WTC11 (cell line): ENCODE measurements at regions of chr17 and their contacts with region 1.

Region 1: DNA sequence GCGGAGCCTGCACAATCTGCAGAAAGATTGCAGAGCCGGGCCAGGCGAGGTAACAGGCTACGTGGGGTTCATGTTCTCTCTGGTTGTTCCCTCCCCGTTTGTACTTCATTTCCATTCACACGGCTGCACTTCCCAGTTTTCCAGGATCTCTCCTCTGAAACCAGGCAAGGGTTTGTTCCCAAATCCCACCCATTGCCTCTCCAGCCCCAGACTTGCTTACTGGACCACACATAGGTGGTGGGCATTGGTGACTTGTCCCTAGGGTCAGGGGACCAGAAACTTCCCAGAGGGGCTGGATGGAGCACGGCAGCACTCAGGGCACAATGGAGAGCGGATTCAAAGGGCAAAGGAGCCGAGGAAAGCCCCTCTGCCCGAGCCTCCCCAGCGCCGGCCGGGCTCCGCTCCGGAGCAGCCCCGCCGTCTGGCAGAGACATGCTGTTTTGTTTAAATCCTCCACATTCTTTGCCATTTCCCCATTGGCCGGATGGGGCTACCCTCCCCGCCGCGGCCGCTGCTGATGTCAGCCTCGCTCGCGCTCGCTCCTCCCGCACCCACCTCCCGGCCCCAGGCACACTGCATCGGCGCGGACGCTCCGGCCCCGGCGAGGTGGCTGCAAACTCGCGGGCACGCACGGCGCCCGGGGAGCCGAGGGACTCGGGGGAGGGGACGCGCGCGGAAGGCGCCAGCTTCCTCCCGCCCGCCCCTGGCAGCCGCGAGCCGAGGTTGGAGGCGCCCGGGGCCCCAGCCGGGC is at the start of gene PITPNC1:
- DNase-seq: peak; percentile 87
- ATAC-seq: peak; percentile 71
- H3K4me3 Mint-ChIP-seq: peak within 1 kb of the TSS; percentile 81
- H3K27ac Mint-ChIP-seq: peak within 1 kb of the TSS; percentile 96
- H3K4me1 Mint-ChIP-seq: peaks cover 35% of the 10 kb centered on the region
- H3K27me3 Mint-ChIP-seq: no peaks in the 10 kb centered on the region; the same call in 1 of the 2 replicates
- CTCF ChIP-seq: no peak
- total RNA-seq, gene PITPNC1: 36.9 to 42.0 TPM (median 39.8 TPM) in 3 replicates

Region 2: DNA sequence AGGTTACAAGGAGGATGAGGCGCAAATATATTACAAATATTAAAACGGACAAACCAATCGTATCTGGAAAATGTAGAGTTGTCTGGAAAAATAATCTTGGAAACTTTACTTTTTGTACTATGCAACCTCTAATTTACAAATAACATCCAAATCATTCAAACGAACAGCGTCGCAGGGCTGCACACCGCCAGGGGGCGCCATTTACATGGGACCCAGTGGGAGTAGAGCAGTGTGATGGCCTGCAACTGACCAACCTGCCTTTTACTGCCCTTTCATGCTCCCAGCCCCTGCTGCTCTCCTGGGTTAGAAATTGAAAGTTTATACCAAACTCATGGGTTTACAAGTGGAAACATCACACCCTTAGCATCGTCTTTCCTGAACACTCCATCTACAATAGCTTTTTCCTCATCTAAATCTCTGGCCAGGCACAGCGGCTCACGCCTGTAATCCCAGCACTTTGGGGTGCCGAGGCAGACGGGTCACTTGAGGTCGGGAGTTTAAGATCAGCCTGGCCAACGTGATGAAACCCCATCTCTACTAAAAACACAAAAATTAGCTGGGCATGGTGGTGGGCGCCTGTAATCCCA is 10.1 kb after region 1 on chr17:
- CTCF ChIA-PET with region 1: interaction called, 14 read pairs
- POLR2A ChIA-PET with region 1: no interaction called
- DNase-seq: peak; percentile 79
- ATAC-seq: peak; percentile 83
- H3K4me3 Mint-ChIP-seq: no peak overlapping the region
- H3K27ac Mint-ChIP-seq: 0 out of 2 replicates have a peak overlapping the region, but pooled peaks have one; percentile 53
- H3K4me1 Mint-ChIP-seq: peaks cover 29% of the 10 kb centered on the region
- H3K27me3 Mint-ChIP-seq: no peaks in the 10 kb centered on the region
- CTCF ChIP-seq: peak; percentile 98

Region 3: GRCh38 chr17:67491009-67491680 is 114.2 kb after region 1 on chr17:
- CTCF ChIA-PET with region 1: interaction called, 13 read pairs
- POLR2A ChIA-PET with region 1: no interaction called
- DNase-seq: peak; percentile 47
- ATAC-seq: peak; percentile 72
- H3K4me3 Mint-ChIP-seq: peak overlapping the region; percentile 14; the same call in 1 of the 2 replicates
- H3K27ac Mint-ChIP-seq: peak overlapping the region; percentile 86
- H3K4me1 Mint-ChIP-seq: peaks cover 56% of the 10 kb centered on the region
- H3K27me3 Mint-ChIP-seq: no peaks in the 10 kb centered on the region
- CTCF ChIP-seq: no peak

Region 4: GRCh38 chr17:67602956-67603355 is 226.0 kb after region 1 on chr17:
- CTCF ChIA-PET with region 1: interaction called, 18 read pairs
- POLR2A ChIA-PET with region 1: no interaction called
- DNase-seq: peak; percentile 62
- ATAC-seq: peak; percentile 92
- H3K4me3 Mint-ChIP-seq: no peak overlapping the region
- H3K27ac Mint-ChIP-seq: 0 out of 2 replicates have a peak overlapping the region, but pooled peaks have one; percentile 17
- H3K4me1 Mint-ChIP-seq: peaks cover 17% of the 10 kb centered on the region
- H3K27me3 Mint-ChIP-seq: no peaks in the 10 kb centered on the region
- CTCF ChIP-seq: 0 out of 2 replicates have a peak, but pooled peaks have one; percentile 31

Region 5: DNA sequence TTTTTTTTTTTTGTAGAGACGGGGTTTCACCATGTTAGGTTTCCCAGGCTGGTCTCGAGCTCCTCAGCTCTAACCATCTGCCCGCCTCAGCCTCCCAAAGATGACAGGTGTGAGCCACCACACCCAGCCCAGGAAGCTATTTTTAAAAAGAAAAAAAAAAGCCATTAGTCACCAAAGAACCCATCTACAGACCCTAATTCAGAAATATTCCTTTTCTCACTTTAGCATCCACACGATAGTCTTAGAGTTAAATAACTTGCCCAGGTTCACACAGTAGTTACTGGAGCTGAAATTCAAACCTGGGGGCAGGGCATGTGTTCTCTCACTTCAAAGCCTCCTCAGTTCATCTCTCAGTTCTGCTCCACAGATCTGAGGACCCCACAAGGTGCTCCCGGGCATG is 270.6 kb after region 1 on chr17:
- CTCF ChIA-PET with region 1: interaction called, 12 read pairs
- POLR2A ChIA-PET with region 1: no interaction called
- DNase-seq: no peak
- ATAC-seq: no peak
- H3K4me3 Mint-ChIP-seq: no peak overlapping the region
- H3K27ac Mint-ChIP-seq: peak overlapping the region; percentile 57; the same call in 1 of the 2 replicates
- H3K4me1 Mint-ChIP-seq: peaks cover 12% of the 10 kb centered on the region
- H3K27me3 Mint-ChIP-seq: no peaks in the 10 kb centered on the region
- CTCF ChIP-seq: no peak

Region 6: GRCh38 chr17:67686241-67686640 is 309.3 kb after region 1 on chr17:
- CTCF ChIA-PET with region 1: interaction called, 15 read pairs
- POLR2A ChIA-PET with region 1: no interaction called
- DNase-seq: no peak
- ATAC-seq: no peak
- H3K4me3 Mint-ChIP-seq: no peak overlapping the region
- H3K27ac Mint-ChIP-seq: no peak overlapping the region
- H3K4me1 Mint-ChIP-seq: peaks cover 18% of the 10 kb centered on the region
- H3K27me3 Mint-ChIP-seq: no peaks in the 10 kb centered on the region
- CTCF ChIP-seq: no peak